GM13976 (cell line): ENCODE measurements at regions of chr2 and their contacts with region 1.

Region 1: DNA sequence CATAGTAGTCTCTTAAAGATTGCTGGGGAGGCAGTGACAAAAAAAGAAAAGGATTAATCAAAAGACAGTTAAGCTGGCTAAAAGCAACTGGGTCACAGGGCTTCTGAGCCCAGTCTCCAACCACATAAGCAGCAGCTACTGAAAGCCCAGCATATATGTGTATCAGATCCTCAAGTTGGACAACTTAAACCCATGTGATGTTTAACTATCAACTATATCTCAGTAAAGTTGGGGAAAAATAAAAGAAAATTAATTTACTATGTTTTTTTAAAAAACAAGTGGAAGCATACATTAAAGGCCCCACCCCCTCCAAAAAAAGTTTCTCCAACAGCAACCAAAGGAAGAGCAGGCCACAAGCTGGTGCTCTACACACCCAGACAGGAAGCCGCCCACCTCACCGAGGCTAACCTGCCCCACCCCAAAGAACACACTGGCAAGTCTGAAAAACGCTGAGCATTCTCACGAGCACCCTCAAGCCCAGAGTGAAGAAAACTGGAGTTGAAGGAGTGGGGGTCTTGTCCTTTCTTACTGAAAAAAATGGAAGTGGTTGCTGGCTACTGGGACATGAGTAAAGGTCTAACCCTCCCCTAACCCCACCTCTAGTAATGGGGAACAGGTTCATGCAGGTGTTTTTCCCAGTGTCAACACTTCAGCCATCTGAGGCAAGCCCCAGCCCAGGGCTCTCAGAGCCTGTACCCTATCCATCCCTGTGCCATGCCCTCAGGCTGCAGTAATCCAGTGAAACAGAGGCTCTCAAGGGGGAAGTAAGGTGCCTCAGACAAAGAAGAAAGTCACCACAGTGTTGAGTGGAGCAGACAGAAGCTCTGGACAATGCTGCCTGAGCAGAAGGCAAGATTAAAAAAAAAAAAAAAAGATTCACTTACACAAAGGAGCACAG is 106.3 kb downstream of the GYPC start:
- DNase-seq: no peak
- CTCF ChIP-seq: no peak

Region 2: DNA sequence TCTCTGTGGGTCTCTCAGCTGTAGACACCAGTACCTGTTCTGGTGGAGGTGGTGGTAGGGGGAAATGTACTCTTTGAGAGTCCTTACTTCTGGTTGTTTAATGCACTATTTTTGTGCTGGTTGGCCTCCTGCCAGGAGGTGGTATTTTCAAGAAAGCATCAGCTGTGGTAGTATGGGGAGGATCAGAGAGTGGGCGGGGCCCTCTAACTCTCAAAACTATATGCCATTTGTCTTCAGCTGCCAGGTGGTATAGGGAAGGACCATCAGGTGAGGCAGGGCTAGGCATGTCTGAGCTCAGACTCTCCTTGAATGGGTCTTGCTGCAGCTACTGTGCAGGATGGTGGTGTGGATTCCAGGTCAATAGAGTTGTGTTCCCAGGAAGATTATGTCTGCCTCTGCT is 1636.3 kb before region 1 on chr2:
- in situ Hi-C with region 1: no loop called
- DNase-seq: no peak
- CTCF ChIP-seq: no peak

Region 3: GRCh38 chr2:126244937-126245336 is 517.3 kb before region 1 on chr2:
- in situ Hi-C with region 1: loop called (anchors 25 kb)
- DNase-seq: peak; percentile 51
- CTCF ChIP-seq: peak; percentile 35

Region 4: GRCh38 chr2:126527836-126528507 is 234.3 kb before region 1 on chr2:
- in situ Hi-C with region 1: loop called (anchors 25 kb)
- DNase-seq: peak; percentile 45
- CTCF ChIP-seq: peak; percentile 51

Region 5: GRCh38 chr2:126850940-126851339 is 88.7 kb after region 1 on chr2:
- in situ Hi-C with region 1: no loop called
- DNase-seq: no peak
- CTCF ChIP-seq: no peak